A549 (cell line): ENCODE measurements at regions of chr3 and their contacts with region 1.

Region 1: DNA sequence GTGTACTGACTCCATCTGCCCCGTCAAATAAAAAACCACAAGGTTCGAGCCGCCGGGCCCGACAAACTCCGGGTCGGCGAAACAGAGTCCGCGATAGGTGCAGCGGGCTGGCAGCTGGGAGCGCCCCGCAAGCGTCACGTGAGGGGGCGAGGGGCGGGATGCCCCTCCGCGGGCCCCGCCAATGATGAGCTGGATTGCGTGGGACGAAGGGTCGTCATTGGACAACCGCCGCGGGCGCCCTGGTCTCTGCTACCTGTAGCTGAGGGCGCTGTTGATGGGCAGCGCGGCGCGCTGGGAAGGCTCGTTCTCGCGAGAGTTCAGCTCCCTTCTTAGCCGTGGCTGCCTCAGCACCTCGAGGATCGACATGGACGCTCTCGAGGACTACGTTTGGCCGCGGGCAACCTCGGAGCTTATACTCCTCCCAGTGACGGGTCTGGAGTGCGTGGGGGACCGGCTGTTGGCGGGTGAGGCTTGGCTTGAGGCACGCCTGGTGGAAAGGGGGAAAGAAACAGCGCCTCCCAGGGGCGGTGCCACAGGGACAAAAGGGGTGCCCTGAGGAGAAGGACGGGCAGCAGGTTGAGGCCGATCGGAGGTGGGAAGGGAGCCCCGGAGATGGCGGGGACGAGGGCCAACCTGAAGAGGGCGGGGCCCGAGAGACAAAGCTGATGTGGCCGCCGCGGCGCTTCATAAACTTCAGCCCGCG is at the start of gene WDR6:
- DNase-seq: peak; percentile 91 to 96
- ATAC-seq: peak; percentile 83 to 94
- H3K4me3 ChIP-seq: peak within 1 kb of the TSS; percentile 100
- H3K27ac ChIP-seq: peak within 1 kb of the TSS; percentile 98 to 100
- H3K4me1 ChIP-seq: peaks cover 21% of the 10 kb centered on the region; the same call in 2 of the 3 replicates
- CTCF ChIP-seq: peak; percentile 13; the same call in 2 of the 3 replicates
- EP300 ChIP-seq: no peak
- POLR2A ChIP-seq: peak; percentile 64
- RAD21 ChIP-seq: no peak
- polyA plus RNA-seq, gene WDR6: 64.2 and 80.5 TPM in 2 replicates

Region 2: GRCh38 chr3:49021813-49022687 is 14.8 kb after region 1 on chr3 and contains the start of gene NDUFAF3:
- CTCF ChIA-PET with region 1: interaction called, 65 read pairs
- POLR2A ChIA-PET with region 1: interaction called, 57 read pairs
- DNase-seq: peak; percentile 63 to 96
- ATAC-seq: peak; percentile 69 to 83
- H3K4me3 ChIP-seq: peak within 1 kb of the TSS; percentile 76
- H3K27ac ChIP-seq: peak within 1 kb of the TSS; percentile 98 to 100
- H3K4me1 ChIP-seq: peaks cover 26% of the 10 kb centered on the region
- CTCF ChIP-seq: peak; percentile 71
- EP300 ChIP-seq: no peak
- POLR2A ChIP-seq: peak; percentile 93
- RAD21 ChIP-seq: no peak
- polyA plus RNA-seq, gene NDUFAF3: 44.3 and 46.5 TPM in 2 replicates

Region 3: GRCh38 chr3:49028673-49029562 is 21.7 kb after region 1 on chr3 and contains the start of gene IMPDH2:
- CTCF ChIA-PET with region 1: interaction called, 3 read pairs
- POLR2A ChIA-PET with region 1: interaction called, 57 read pairs
- DNase-seq: peak; percentile 47 to 91
- ATAC-seq: peak; percentile 83 to 88
- H3K4me3 ChIP-seq: peak within 1 kb of the TSS; percentile 81
- H3K27ac ChIP-seq: peak within 1 kb of the TSS; percentile 90 to 91
- H3K4me1 ChIP-seq: peaks cover 14% of the 10 kb centered on the region
- CTCF ChIP-seq: no peak
- EP300 ChIP-seq: no peak
- POLR2A ChIP-seq: peak; percentile 100
- RAD21 ChIP-seq: no peak
- polyA plus RNA-seq, gene IMPDH2: 212 and 222 TPM in 2 replicates